GM13977 (cell line): ENCODE measurements at regions of chr9 and their contacts with region 1.

Region 1: GRCh38 chr9:92133949-92134604 is 18.9 kb upstream of the SPTLC1 start:
- DNase-seq: peak; percentile 80
- CTCF ChIP-seq: peak; percentile 94

Region 2: GRCh38 chr9:92265159-92265558 is 131.1 kb after region 1 on chr9:
- in situ Hi-C with region 1: loop called (anchors 10 kb)
- DNase-seq: no peak
- CTCF ChIP-seq: no peak

Region 3: GRCh38 chr9:92455217-92455616 is 321.1 kb after region 1 on chr9:
- in situ Hi-C with region 1: loop called (anchors 25 kb)
- DNase-seq: no peak
- CTCF ChIP-seq: peak; percentile 46

Region 4: GRCh38 chr9:92634712-92635605 is 500.9 kb after region 1 on chr9:
- in situ Hi-C with region 1: loop called (anchors 25 kb)
- DNase-seq: peak; percentile 86
- CTCF ChIP-seq: peak; percentile 93

Region 5: GRCh38 chr9:92790542-92791527 is 656.8 kb after region 1 on chr9:
- in situ Hi-C with region 1: loop called (anchors 25 kb)
- DNase-seq: peak; percentile 75
- CTCF ChIP-seq: peak; percentile 90